Activated CD4-positive, alpha-beta T cell treated with anti-CD3 and anti-CD28 coated beads, Interleukin-2, amount 10 ng/mL, durations not matched to agents 24 days and 14 days (primary cell): ENCODE measurements at regions of chr11 and their contacts with region 1.

Region 1: DNA sequence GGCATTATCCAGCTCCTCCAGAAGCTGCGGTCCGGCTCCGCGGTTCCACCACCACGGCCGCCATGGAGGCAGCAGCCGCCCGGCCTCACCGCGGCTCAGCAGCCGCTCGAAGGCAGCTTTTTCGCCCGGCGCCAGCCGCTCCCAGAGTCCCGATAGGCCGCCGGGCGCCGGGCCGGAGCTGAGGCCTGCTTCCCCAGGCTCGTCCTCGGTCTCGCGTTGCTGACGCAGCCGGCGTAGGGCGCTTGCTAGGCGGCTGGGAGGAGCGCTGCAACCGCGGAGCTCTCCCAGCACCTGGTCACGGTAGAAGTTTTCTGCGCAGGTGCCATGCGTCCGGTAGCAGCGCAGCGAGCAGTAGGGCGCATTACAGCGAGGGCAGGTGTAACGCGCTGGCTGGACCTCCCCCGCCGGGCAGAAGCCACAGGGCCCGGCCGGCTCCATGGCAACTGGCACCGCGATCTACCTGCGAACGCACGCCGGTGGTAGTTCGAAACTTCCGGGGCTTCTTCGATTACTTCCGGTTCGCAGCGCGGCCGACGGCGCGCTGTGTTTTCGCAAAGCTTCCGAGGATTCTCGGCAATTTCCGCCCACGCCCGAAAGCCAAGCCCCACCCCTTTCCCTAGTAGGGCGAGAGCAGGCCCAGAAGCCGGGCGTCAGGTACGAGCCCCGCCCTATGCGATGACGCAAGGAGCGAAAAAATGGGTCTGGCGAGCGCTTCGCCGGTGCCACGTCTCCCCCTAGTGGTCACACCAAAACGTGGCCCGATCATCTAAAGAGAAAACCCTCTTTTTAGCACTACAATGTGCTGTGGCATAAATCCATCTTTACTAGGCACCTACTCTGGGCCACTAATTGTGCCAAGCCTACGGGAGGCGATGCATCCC is at the start of gene ZNHIT2:
- DNase-seq: peak; percentile 100
- H3K4me3 Mint-ChIP-seq: peak within 1 kb of the TSS; percentile 90
- H3K27ac Mint-ChIP-seq: peak within 1 kb of the TSS; percentile 95
- H3K4me1 Mint-ChIP-seq: peaks cover 39% of the 10 kb centered on the region
- H3K27me3 Mint-ChIP-seq: no peaks in the 10 kb centered on the region
- total RNA-seq, gene ZNHIT2: 17.1 and 18.1 TPM in 2 replicates

Region 2: GRCh38 chr11:64846998-64847666 is 270.3 kb before region 1 on chr11:
- intact Hi-C with region 1: loop called (anchors 1 kb)
- DNase-seq: peak; percentile 97
- H3K4me3 Mint-ChIP-seq: no peak overlapping the region
- H3K27ac Mint-ChIP-seq: no peak overlapping the region
- H3K4me1 Mint-ChIP-seq: peaks cover 46% of the 10 kb centered on the region
- H3K27me3 Mint-ChIP-seq: peaks cover 2% of the 10 kb centered on the region

Region 3: GRCh38 chr11:65013692-65014145 is 103.7 kb before region 1 on chr11:
- intact Hi-C with region 1: loop called (anchors 1 kb)
- DNase-seq: peak; percentile 96
- H3K4me3 Mint-ChIP-seq: peak overlapping the region; percentile 92
- H3K27ac Mint-ChIP-seq: peak overlapping the region; percentile 98
- H3K4me1 Mint-ChIP-seq: peaks cover 24% of the 10 kb centered on the region
- H3K27me3 Mint-ChIP-seq: no peaks in the 10 kb centered on the region

Region 4: DNA sequence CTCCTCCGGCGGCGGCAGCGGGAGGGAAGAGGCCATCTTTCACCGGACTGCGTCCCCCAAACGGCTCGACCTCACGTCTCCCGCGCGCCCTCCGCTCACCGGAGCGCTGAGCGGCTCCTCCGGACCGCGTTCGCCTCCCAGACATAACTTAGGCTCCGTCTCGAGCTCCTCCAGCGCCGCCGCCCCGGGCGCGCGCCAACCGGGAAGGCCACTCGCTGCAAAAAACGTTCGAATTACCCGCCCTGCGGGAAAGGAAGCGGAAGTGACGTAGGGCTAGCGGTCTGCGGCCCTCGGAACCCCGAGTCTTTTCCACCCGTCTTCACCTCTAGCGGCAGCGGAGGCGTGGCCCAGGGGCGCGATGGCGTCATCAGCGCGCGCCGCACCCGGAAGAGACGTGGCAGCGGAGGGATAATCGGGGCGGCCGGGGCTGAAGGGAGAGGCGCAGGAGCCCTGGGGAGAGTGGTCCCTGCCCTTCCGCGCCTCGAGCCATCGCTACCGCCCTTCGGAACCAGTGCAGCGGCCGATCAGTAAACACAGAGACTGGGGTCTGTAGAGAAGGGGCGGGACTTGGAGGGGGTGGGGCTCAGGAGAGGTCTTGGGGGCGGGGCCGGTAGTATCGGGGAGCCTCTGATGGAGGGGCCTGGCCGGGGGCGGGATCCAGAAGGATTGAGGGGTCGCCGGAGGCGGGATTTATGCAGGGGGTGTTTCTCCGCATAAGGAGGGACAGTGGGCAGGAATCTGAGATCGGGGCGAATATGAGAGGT is 33.4 kb before region 1 on chr11 and contains the starts of genes CDCA5 and ZFPL1:
- intact Hi-C with region 1: loop called (anchors 1 kb)
- DNase-seq: peak; percentile 100
- H3K4me3 Mint-ChIP-seq: peak within 1 kb of the TSS; percentile 99
- H3K27ac Mint-ChIP-seq: peak within 1 kb of the TSS; percentile 99
- H3K4me1 Mint-ChIP-seq: peaks cover 46% of the 10 kb centered on the region
- H3K27me3 Mint-ChIP-seq: peaks cover 2% of the 10 kb centered on the region
- total RNA-seq, gene CDCA5: 94.4 and 95.1 TPM in 2 replicates
- total RNA-seq, gene ZFPL1: 33.3 and 34.7 TPM in 2 replicates

Region 5: GRCh38 chr11:65134386-65135253 is 17.2 kb after region 1 on chr11 and contains the start of gene SYVN1:
- intact Hi-C with region 1: loop called (anchors 1 kb)
- DNase-seq: peak; percentile 98
- H3K4me3 Mint-ChIP-seq: peak within 1 kb of the TSS; percentile 92
- H3K27ac Mint-ChIP-seq: peak within 1 kb of the TSS; percentile 97
- H3K4me1 Mint-ChIP-seq: peaks cover 31% of the 10 kb centered on the region
- H3K27me3 Mint-ChIP-seq: no peaks in the 10 kb centered on the region
- total RNA-seq, gene SYVN1: 36.9 and 39.0 TPM in 2 replicates